Activated CD4-positive, alpha-beta T cell treated with anti-CD3 and anti-CD28 coated beads for 36 hours (primary cell): ENCODE measurements at regions of chr3 and their contacts with region 1.

Region 1: DNA sequence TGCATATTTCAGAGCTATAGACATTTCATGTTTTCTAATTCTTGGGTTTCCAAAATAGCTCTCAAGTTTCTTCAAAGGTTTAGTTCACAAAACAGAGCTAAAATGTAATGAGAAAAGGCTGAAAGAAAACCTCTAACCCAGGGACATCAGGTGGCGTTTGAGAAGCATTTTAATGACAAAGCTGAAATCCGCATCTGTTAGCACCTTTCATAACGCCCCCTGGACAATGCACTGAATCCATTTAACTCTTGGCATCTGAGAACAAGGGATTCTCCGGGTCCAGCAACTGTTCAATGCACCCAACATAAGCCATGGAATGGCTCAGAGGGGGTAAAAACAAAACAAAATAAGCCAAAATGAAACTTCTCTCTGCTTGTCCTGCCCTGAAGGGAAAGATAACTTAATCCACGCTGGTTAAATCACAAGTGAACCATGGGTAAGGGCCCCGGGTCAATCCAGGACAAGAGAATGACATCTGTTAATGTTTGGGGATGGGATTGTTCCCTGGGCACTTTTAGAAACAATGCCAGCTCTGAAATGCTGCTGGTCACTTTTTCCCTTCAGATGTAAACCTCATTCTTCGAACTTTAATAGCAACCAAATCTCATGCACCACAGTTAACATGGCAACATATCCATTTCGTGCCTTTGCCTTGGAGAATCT is 466.2 kb upstream of the ADAMTS9 start:
- DNase-seq: no peak
- ATAC-seq: no peak
- H3K4me3 Mint-ChIP-seq: no peak overlapping the region
- H3K27ac Mint-ChIP-seq: no peak overlapping the region
- H3K4me1 Mint-ChIP-seq: no peaks in the 10 kb centered on the region
- H3K27me3 Mint-ChIP-seq: no peaks in the 10 kb centered on the region

Region 2: DNA sequence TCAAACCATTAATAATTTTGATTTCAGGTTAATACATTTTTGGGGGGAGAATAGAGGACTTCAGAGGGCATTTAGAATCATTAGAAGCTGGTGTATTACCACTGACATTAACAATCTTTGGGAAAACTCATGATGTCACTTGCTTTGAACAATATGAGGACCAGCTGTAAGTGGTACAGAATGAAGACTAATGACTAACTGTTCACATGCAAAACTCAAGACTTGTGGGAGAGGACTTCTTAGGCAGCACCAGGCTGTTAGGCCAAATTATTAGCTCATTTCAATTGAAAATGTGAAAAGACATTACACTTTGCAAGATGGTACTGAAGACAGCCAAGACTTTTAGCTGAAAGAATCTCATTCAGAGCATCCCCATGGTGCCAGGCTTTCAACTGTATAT is 39.9 kb before region 1 on chr3:
- CTCF ChIA-PET with region 1: no interaction called
- POLR2A ChIA-PET with region 1: interaction called, 11 read pairs
- intact Hi-C with region 1: no loop called
- DNase-seq: no peak
- ATAC-seq: no peak
- H3K4me3 Mint-ChIP-seq: no peak overlapping the region
- H3K27ac Mint-ChIP-seq: no peak overlapping the region
- H3K4me1 Mint-ChIP-seq: no peaks in the 10 kb centered on the region
- H3K27me3 Mint-ChIP-seq: no peaks in the 10 kb centered on the region